Activated CD4-positive, alpha-beta memory T cell treated with anti-CD3 and anti-CD28 coated beads, Interleukin-2, amount 10 ng/mL, durations not matched to agents 7 days and 5 days (primary cell): ENCODE measurements at regions of chr1 and their contacts with region 1.

Region 1: DNA sequence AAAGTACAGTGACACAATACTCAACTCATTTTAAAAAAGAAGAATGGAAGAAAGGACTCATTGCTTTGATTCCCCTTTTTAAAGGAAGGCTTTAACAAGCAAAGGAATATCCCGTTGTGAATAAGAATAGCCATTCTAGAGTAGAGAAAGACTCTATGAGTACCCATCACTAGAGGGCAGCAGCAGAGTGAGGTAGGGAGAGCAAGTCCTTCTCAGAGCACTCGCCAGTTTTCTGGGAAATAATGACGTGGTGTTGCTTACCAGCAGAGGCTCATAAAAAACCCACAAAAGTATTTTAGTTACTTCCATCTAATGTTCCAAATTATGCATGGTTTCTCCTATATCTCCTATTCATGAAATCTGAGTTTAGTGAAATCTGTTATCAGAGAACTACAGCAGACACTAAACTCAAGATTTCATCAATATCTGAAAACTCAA is 74.6 kb downstream of the USP24 start:
- DNase-seq: peak; percentile 77
- H3K4me3 Mint-ChIP-seq: peak overlapping the region; percentile 14
- H3K27ac Mint-ChIP-seq: peak overlapping the region; percentile 57
- H3K4me1 Mint-ChIP-seq: peaks cover 21% of the 10 kb centered on the region
- H3K27me3 Mint-ChIP-seq: no peaks in the 10 kb centered on the region

Region 2: GRCh38 chr1:55107101-55107500 is 33.5 kb before region 1 on chr1:
- CTCF ChIA-PET with region 1: no interaction called
- POLR2A ChIA-PET with region 1: no interaction called
- DNase-seq: no peak
- H3K4me3 Mint-ChIP-seq: no peak overlapping the region
- H3K27ac Mint-ChIP-seq: no peak overlapping the region
- H3K4me1 Mint-ChIP-seq: no peaks in the 10 kb centered on the region
- H3K27me3 Mint-ChIP-seq: no peaks in the 10 kb centered on the region

Region 3: GRCh38 chr1:55127827-55128343 is 12.7 kb before region 1 on chr1:
- CTCF ChIA-PET with region 1: interaction called, 11 read pairs
- POLR2A ChIA-PET with region 1: interaction called, 4 read pairs
- DNase-seq: peak; percentile 38
- H3K4me3 Mint-ChIP-seq: peak overlapping the region; percentile 6
- H3K27ac Mint-ChIP-seq: peak overlapping the region; percentile 79
- H3K4me1 Mint-ChIP-seq: peaks cover 23% of the 10 kb centered on the region
- H3K27me3 Mint-ChIP-seq: no peaks in the 10 kb centered on the region

Region 4: GRCh38 chr1:55215256-55216021 is 74.9 kb after region 1 on chr1 and contains the start of gene USP24:
- CTCF ChIA-PET with region 1: interaction called, 13 read pairs
- POLR2A ChIA-PET with region 1: interaction called, 3 read pairs
- DNase-seq: peak; percentile 86
- H3K4me3 Mint-ChIP-seq: peak within 1 kb of the TSS; percentile 95
- H3K27ac Mint-ChIP-seq: peak within 1 kb of the TSS; percentile 96
- H3K4me1 Mint-ChIP-seq: peaks cover 61% of the 10 kb centered on the region
- H3K27me3 Mint-ChIP-seq: no peaks in the 10 kb centered on the region
- total RNA-seq, gene USP24: 34.9 to 35.6 TPM

Region 5: GRCh38 chr1:55277377-55278130 is 137.0 kb after region 1 on chr1:
- CTCF ChIA-PET with region 1: interaction called, 76 read pairs
- POLR2A ChIA-PET with region 1: no interaction called
- DNase-seq: peak; percentile 84
- H3K4me3 Mint-ChIP-seq: no peak overlapping the region
- H3K27ac Mint-ChIP-seq: no peak overlapping the region
- H3K4me1 Mint-ChIP-seq: peaks cover 21% of the 10 kb centered on the region
- H3K27me3 Mint-ChIP-seq: peaks cover 7% of the 10 kb centered on the region